Endothelial cell of umbilical vein (primary cell): ENCODE measurements at regions of chr1 and their contacts with region 1.

Region 1: GRCh38 chr1:56578963-56579875 is at the start of gene PLPP3:
- DNase-seq: peak; percentile 94
- H3K4me3 ChIP-seq: peak within 1 kb of the TSS; percentile 42 to 99 (median 66)
- H3K27ac ChIP-seq: peak within 1 kb of the TSS; percentile 75
- H3K4me1 ChIP-seq: peaks cover 36% of the 10 kb centered on the region
- H3K27me3 ChIP-seq: no peaks in the 10 kb centered on the region
- CTCF ChIP-seq: peak; percentile 34 to 37
- POLR2A ChIP-seq: peak; percentile 93
- total RNA-seq, gene PLPP3: 7.2 and 14.1 TPM in 2 replicates

Region 2: GRCh38 chr1:55284852-55285251 is 1294.4 kb before region 1 on chr1:
- CTCF ChIA-PET with region 1: interaction called, 99 read pairs
- POLR2A ChIA-PET with region 1: no interaction called
- dilution Hi-C with region 1: no loop called
- intact Hi-C with region 1: no loop called
- DNase-seq: peak; percentile 64
- H3K4me3 ChIP-seq: no peak overlapping the region
- H3K27ac ChIP-seq: no peak overlapping the region
- H3K4me1 ChIP-seq: peaks cover 12% of the 10 kb centered on the region
- H3K27me3 ChIP-seq: no peaks in the 10 kb centered on the region
- CTCF ChIP-seq: peak; percentile 56 to 59
- POLR2A ChIP-seq: no peak

Region 3: GRCh38 chr1:55478742-55479141 is 1100.5 kb before region 1 on chr1:
- CTCF ChIA-PET with region 1: interaction called, 105 read pairs
- POLR2A ChIA-PET with region 1: no interaction called
- dilution Hi-C with region 1: no loop called
- intact Hi-C with region 1: no loop called
- DNase-seq: peak; percentile 68
- H3K4me3 ChIP-seq: no peak overlapping the region
- H3K27ac ChIP-seq: no peak overlapping the region
- H3K4me1 ChIP-seq: peaks cover 19% of the 10 kb centered on the region
- H3K27me3 ChIP-seq: no peaks in the 10 kb centered on the region
- CTCF ChIP-seq: peak in 1 of 2 donors; percentile 19
- POLR2A ChIP-seq: no peak

Region 4: GRCh38 chr1:56137521-56138505 is 441.4 kb before region 1 on chr1:
- CTCF ChIA-PET with region 1: interaction called, 3 read pairs
- POLR2A ChIA-PET with region 1: no interaction called
- dilution Hi-C with region 1: no loop called
- intact Hi-C with region 1: loop called (anchors 1 kb)
- DNase-seq: peak; percentile 93
- H3K4me3 ChIP-seq: no peak overlapping the region
- H3K27ac ChIP-seq: peak overlapping the region; percentile 72
- H3K4me1 ChIP-seq: peaks cover 20% of the 10 kb centered on the region
- H3K27me3 ChIP-seq: no peaks in the 10 kb centered on the region
- CTCF ChIP-seq: no peak
- POLR2A ChIP-seq: no peak

Region 5: DNA sequence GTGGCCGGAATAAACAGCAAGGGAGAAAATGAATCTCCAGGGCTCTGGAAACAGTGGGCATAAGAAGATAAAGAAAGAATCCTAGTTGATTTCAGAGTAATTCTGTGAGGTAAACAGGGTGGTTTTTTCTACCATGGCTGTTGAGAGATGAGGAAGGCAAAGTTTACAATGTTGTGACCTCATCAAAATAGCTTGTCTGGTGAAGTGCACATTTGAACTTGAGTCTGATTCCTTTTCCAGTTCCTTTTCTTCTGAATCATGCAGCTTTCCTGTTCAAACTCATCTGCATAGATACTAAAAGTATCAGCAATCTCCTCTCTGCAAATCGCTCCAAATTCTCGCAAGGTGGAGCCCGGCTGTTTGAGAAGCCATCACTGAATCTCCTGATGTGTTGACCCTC is 161.6 kb before region 1 on chr1:
- CTCF ChIA-PET with region 1: interaction called, 19 read pairs
- POLR2A ChIA-PET with region 1: no interaction called
- dilution Hi-C with region 1: no loop called
- intact Hi-C with region 1: loop called (anchors 1 kb)
- DNase-seq: peak; percentile 78
- H3K4me3 ChIP-seq: no peak overlapping the region
- H3K27ac ChIP-seq: peak overlapping the region; percentile 1
- H3K4me1 ChIP-seq: peaks cover 16% of the 10 kb centered on the region
- H3K27me3 ChIP-seq: no peaks in the 10 kb centered on the region
- CTCF ChIP-seq: no peak
- POLR2A ChIP-seq: no peak

Region 6: GRCh38 chr1:56496821-56497772 is 82.1 kb before region 1 on chr1:
- CTCF ChIA-PET with region 1: interaction called, 13 read pairs
- POLR2A ChIA-PET with region 1: no interaction called
- dilution Hi-C with region 1: no loop called
- intact Hi-C with region 1: no loop called
- DNase-seq: peak; percentile 76
- H3K4me3 ChIP-seq: no peak overlapping the region
- H3K27ac ChIP-seq: peak overlapping the region; percentile 27
- H3K4me1 ChIP-seq: peaks cover 20% of the 10 kb centered on the region
- H3K27me3 ChIP-seq: no peaks in the 10 kb centered on the region
- CTCF ChIP-seq: no peak
- POLR2A ChIP-seq: no peak